Endothelial cell of umbilical vein (primary cell): ENCODE measurements at regions of chr5 and their contacts with region 1.

Region 1: GRCh38 chr5:36264202-36264760 is 22.6 kb upstream of the NADK2 start:
- DNase-seq: no peak
- H3K4me3 ChIP-seq: no peak overlapping the region
- H3K27ac ChIP-seq: no peak overlapping the region
- H3K4me1 ChIP-seq: no peaks in the 10 kb centered on the region
- H3K27me3 ChIP-seq: peaks cover 2 to 5% of the 10 kb centered on the region in 2 experiments
- CTCF ChIP-seq: no peak
- POLR2A ChIP-seq: no peak

Region 2: DNA sequence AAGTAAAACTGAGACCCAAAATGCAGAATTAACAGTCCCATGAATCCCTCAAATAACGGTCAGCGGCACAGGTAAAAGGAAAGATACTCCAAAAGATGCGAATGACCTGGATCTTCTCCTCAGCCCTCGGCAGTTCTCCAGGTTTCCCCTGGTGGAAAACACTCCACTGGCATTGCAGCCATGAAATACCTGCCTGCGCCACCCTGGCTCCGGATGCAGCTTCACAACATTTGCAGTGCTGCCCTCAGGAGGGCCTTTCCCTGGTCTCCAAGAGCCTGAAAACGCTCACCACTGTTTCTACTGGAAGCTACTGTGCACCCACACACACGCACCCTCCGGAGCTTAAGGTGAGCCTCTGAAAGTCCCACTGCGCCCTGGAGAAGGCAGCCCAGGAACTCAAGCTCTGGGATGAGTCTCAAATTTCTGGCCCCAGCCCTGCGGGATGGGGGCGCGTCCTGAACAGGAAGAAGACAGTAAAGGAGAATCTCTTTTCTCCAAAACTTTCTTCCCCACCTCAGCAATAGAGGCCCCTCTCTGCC is 198.2 kb before region 1 on chr5:
- CTCF ChIA-PET with region 1: no interaction called
- POLR2A ChIA-PET with region 1: no interaction called
- dilution Hi-C with region 1: no loop called
- intact Hi-C with region 1: no loop called
- DNase-seq: no peak
- H3K4me3 ChIP-seq: no peak overlapping the region
- H3K27ac ChIP-seq: no peak overlapping the region
- H3K4me1 ChIP-seq: no peaks in the 10 kb centered on the region
- H3K27me3 ChIP-seq: peaks cover 0 to 12% of the 10 kb centered on the region in 2 experiments
- CTCF ChIP-seq: no peak
- POLR2A ChIP-seq: no peak

Region 3: DNA sequence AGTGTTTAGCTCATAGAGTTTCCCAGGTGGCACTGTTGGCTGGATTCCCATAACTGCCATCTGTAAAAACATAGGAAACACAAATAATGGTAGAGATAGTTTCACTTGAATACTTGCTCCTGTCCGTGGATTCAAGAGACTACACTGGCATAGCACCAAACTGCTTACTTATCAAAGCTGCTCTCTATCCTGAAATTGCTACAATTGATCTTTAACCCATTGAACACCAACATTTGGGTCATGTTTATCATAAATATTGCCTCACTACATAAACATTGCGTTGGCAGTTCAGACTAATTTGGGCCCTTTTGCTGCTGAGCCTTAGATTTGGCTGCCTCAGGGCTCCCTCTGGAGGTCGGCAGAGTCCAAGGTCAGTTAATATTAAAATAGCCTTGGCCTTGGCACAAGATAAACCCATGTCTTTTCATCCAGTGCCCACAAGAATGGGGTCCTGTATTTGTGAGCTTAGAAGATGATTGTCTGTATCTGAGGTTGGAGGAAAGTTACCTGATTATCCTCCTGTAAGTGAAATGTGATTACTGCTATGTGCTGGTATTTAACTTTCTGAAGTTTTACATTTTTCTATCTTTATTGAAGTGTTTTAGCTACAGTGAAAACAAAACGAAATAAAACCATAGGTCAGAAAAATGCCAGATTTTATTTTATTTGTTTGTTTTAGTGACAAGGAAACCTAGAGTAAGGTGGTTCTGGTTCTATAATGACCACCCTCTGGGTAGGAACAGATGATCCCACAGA is 41.5 kb after region 1 on chr5:
- CTCF ChIA-PET with region 1: interaction called, 13 read pairs
- POLR2A ChIA-PET with region 1: no interaction called
- dilution Hi-C with region 1: no loop called
- intact Hi-C with region 1: loop called (anchors 1 kb)
- DNase-seq: peak; percentile 61
- H3K4me3 ChIP-seq: no peak overlapping the region
- H3K27ac ChIP-seq: no peak overlapping the region
- H3K4me1 ChIP-seq: no peaks in the 10 kb centered on the region
- H3K27me3 ChIP-seq: peaks cover 6 to 9% of the 10 kb centered on the region in 2 experiments
- CTCF ChIP-seq: peak; percentile 58 to 59
- POLR2A ChIP-seq: no peak

Region 4: GRCh38 chr5:36403632-36404311 is 139.5 kb after region 1 on chr5:
- CTCF ChIA-PET with region 1: interaction called, 5 read pairs
- POLR2A ChIA-PET with region 1: no interaction called
- dilution Hi-C with region 1: no loop called
- intact Hi-C with region 1: loop called (anchors 10 kb)
- DNase-seq: no peak
- H3K4me3 ChIP-seq: no peak overlapping the region
- H3K27ac ChIP-seq: no peak overlapping the region
- H3K4me1 ChIP-seq: no peaks in the 10 kb centered on the region
- H3K27me3 ChIP-seq: no peaks in the 10 kb centered on the region
- CTCF ChIP-seq: no peak
- POLR2A ChIP-seq: no peak